Naive thymus-derived CD8-positive, alpha-beta T cell (primary cell): ENCODE measurements at regions of chr15 and their contacts with region 1.

Region 1: GRCh38 chr15:67146875-67147381 is 81.5 kb downstream of the SMAD3 start:
- DNase-seq: peak in 1 of 10 donors; percentile 11
- ATAC-seq: peak; percentile 54 to 67
- H3K4me3 Mint-ChIP-seq: peak overlapping the region in 8 of 10 donors; percentile 29 to 62 (median 44)
- H3K27ac Mint-ChIP-seq: peak overlapping the region in 9 of 10 donors; percentile 3 to 84 (median 53)
- H3K4me1 Mint-ChIP-seq: peaks cover 34 to 93% (median 55%) of the 10 kb centered on the region in 4 donors
- H3K27me3 Mint-ChIP-seq: peaks cover 0 to 1% (median 0%) of the 10 kb centered on the region in 5 donors

Region 2: GRCh38 chr15:67134067-67134838 is 12.7 kb before region 1 on chr15:
- POLR2A ChIA-PET with region 1: interaction called, 10 read pairs
- DNase-seq: peak in 9 of 10 donors; percentile 48 to 84 (median 74)
- ATAC-seq: peak; percentile 98
- H3K4me3 Mint-ChIP-seq: peak overlapping the region; percentile 77 to 92 (median 86)
- H3K27ac Mint-ChIP-seq: peak overlapping the region; percentile 97 to 99 (median 99)
- H3K4me1 Mint-ChIP-seq: peaks cover 18 to 95% (median 63%) of the 10 kb centered on the region in 4 donors
- H3K27me3 Mint-ChIP-seq: no peaks in the 10 kb centered on the region

Region 3: DNA sequence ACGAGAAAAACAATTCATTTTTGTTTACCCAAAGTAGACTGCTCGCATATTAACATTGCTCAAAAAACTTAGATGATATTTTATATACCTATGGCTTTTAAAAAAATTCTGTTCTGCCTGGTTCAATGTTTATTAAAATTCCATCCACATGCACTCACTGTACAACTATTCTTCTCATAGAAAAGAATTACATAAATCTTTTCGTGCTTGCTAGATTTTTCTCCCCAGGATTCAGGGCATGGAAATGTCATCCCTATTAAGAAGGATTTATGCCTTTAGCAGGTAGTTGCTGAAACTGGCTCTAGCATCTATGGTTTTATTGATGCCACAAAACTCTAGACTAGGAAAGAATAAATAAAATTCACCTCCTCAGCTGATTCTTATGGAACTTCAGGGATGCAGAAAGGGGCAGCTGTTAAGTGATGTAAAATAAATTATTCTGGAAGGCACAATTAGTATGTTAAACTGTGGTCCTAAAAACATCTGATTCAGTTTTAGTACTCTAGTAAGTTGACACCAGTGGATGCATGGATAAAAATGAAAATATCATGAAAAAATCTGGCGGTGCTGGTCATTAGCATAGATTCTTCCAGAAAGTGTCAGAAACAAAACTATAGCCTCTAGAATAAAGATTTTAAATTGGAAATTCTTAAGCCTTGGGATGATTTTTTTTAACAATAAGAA is 65.9 kb after region 1 on chr15:
- POLR2A ChIA-PET with region 1: no interaction called
- DNase-seq: no peak
- ATAC-seq: no peak
- H3K4me3 Mint-ChIP-seq: no peak overlapping the region
- H3K27ac Mint-ChIP-seq: no peak overlapping the region
- H3K4me1 Mint-ChIP-seq: peaks cover 0 to 2% (median 0%) of the 10 kb centered on the region in 4 donors
- H3K27me3 Mint-ChIP-seq: no peaks in the 10 kb centered on the region